Activated CD8-positive, alpha-beta T cell treated with anti-CD3 and anti-CD28 coated beads, Interleukin-2, amount 10 ng/mL, durations not matched to agents 7 days and 5 days (primary cell): ENCODE measurements at regions of chr14 and their contacts with region 1.

Region 1: GRCh38 chr14:64636208-64636979 is 67.8 kb upstream of the PLEKHG3 start:
- DNase-seq: peak; percentile 79
- ATAC-seq: peak; percentile 93
- H3K4me3 Mint-ChIP-seq: no peak overlapping the region
- H3K27ac Mint-ChIP-seq: no peak overlapping the region
- H3K4me1 Mint-ChIP-seq: peaks cover 10% of the 10 kb centered on the region
- H3K27me3 Mint-ChIP-seq: peaks cover 16% of the 10 kb centered on the region

Region 2: GRCh38 chr14:64520701-64521100 is 115.7 kb before region 1 on chr14:
- CTCF ChIA-PET with region 1: interaction called, 12 read pairs
- POLR2A ChIA-PET with region 1: no interaction called
- DNase-seq: no peak
- ATAC-seq: no peak
- H3K4me3 Mint-ChIP-seq: no peak overlapping the region
- H3K27ac Mint-ChIP-seq: no peak overlapping the region
- H3K4me1 Mint-ChIP-seq: peaks cover 18% of the 10 kb centered on the region
- H3K27me3 Mint-ChIP-seq: no peaks in the 10 kb centered on the region

Region 3: GRCh38 chr14:64584190-64584589 is 52.2 kb before region 1 on chr14:
- CTCF ChIA-PET with region 1: interaction called, 12 read pairs
- POLR2A ChIA-PET with region 1: no interaction called
- DNase-seq: no peak
- ATAC-seq: no peak
- H3K4me3 Mint-ChIP-seq: no peak overlapping the region
- H3K27ac Mint-ChIP-seq: no peak overlapping the region
- H3K4me1 Mint-ChIP-seq: no peaks in the 10 kb centered on the region
- H3K27me3 Mint-ChIP-seq: no peaks in the 10 kb centered on the region

Region 4: DNA sequence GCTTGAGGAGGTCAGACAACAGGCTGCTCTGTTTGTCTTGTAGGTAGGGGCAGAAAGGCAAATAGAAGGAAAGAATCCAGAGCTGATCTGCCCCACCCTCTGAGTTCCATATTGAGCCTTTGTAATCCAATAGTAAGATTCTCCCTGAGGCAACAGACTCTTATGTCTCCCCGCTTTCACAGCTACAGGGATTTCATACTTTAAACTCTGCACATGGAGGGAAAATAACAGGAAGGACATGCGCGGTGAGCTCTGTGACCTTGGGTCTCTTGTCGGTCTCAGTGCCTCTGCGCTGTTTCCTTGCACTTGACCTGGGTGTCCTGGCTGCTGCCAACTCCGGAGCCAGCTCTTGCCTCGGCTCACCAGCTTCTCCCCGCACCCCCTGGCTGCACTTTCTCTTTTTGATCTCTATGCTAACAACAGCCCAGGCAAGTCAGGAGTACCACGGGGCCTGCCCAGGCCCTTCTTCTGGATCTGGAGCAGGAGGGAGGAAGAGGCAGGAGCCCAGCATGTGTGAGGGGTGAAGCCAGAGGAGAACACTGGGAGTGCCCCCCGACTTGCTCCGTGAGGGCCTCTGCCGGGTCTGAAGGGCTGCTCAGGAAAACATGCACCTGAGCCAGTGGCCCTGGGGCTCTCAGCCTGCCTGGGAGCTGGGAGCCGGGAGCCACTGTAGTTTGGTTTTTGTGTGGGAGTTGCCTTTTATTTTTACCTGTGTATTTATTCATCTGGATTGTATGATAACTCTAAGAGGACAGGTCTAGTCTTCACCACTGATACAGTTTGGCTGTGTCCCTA is 10.7 kb before region 1 on chr14:
- CTCF ChIA-PET with region 1: interaction called, 10 read pairs
- POLR2A ChIA-PET with region 1: interaction called, 4 read pairs
- DNase-seq: no peak
- ATAC-seq: no peak
- H3K4me3 Mint-ChIP-seq: no peak overlapping the region
- H3K27ac Mint-ChIP-seq: no peak overlapping the region
- H3K4me1 Mint-ChIP-seq: peaks cover 14% of the 10 kb centered on the region
- H3K27me3 Mint-ChIP-seq: peaks cover 31% of the 10 kb centered on the region

Region 5: GRCh38 chr14:64720131-64720576 is 83.8 kb after region 1 on chr14:
- CTCF ChIA-PET with region 1: no interaction called
- POLR2A ChIA-PET with region 1: no interaction called
- DNase-seq: no peak
- ATAC-seq: no peak
- H3K4me3 Mint-ChIP-seq: no peak overlapping the region
- H3K27ac Mint-ChIP-seq: no peak overlapping the region
- H3K4me1 Mint-ChIP-seq: peaks cover 53% of the 10 kb centered on the region
- H3K27me3 Mint-ChIP-seq: peaks cover 14% of the 10 kb centered on the region